PC-9 (cell line): ENCODE measurements at regions of chr1 and their contacts with region 1.

Region 1: GRCh38 chr1:85502625-85503083 is 37.7 kb upstream of the DDAH1 start:
- DNase-seq: peak; percentile 35 to 67
- H3K4me3 ChIP-seq: no peak overlapping the region
- H3K27ac ChIP-seq: no peak overlapping the region
- H3K4me1 ChIP-seq: no peaks in the 10 kb centered on the region
- H3K27me3 ChIP-seq: no peaks in the 10 kb centered on the region
- CTCF ChIP-seq: peak; percentile 84

Region 2: DNA sequence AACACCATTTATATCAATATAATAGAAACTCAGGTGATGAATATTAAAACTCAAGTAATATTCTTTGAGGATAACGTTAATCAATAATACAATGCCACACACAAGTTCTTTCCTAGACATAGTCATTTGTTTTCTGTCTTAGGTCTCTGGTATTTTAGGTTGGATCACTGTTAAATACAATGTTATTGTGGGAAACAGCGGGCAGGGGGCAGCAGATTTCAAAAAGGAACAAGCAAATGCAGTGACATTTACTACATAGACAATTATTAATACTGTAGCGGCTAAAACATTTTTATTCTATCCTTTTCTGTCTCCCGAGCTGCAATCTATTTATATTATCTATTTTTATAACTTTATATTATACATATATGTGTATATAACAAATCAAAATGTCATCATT is 392.0 kb after region 1 on chr1:
- CTCF ChIA-PET with region 1: interaction called, 10 read pairs
- POLR2A ChIA-PET with region 1: no interaction called
- intact Hi-C with region 1: no loop called
- DNase-seq: peak in 1 of 2 experiments; percentile 13
- H3K4me3 ChIP-seq: no peak overlapping the region
- H3K27ac ChIP-seq: no peak overlapping the region
- H3K4me1 ChIP-seq: no peaks in the 10 kb centered on the region
- H3K27me3 ChIP-seq: no peaks in the 10 kb centered on the region
- CTCF ChIP-seq: peak; percentile 65